ENCODE measurements at regions of chr1 and their contacts with region 1.

Region 1: DNA sequence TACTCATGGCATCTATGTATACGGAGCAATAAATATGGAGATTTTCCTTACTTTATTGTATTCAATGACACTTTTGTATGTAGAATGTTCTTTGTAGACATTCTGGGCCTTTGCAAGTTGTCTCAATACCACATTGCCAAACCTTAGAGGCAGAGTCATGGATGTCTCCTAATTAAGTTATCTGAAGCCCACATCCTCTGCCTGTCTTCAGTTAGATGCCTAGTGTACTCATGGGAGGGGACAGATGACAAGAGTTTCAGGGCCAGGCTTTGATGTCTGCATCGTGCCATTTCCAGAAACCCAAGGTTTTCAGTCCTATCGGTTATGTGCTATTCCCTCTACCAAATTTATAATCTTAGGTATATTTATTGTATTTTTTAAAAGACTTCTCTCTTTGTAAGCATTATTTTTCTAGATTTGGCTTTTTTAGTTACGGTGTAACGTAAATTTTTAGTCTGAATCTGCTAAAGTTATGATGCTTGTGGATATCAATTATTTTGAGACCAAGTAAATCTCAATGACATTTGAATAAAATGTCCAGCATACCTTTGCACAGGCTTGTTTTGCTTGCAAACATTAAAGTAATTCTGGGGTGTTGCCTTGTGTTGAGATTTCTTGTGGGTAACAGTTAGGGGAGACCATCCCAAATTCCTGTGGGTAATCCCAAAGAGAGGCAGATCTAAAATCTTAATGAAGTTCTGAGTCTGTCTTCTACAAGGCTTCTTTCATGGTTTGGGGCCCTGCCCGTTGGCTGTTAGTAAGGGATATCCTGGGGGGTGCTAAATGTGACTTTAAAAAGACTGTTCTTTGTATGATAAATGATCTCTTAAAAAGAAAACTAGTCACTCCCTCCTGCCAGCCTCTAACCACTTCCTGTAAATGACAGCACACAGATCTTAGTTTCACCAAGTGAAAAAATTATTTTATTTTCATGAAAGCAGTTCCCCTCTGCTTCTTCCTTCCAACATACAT is 8.0 kb upstream of the MACF1 start:
- DNase-seq: peak; percentile 45
- H3K4me3 Mint-ChIP-seq: peak overlapping the region; percentile 70
- H3K27ac Mint-ChIP-seq: peak overlapping the region; percentile 95
- H3K4me1 Mint-ChIP-seq: peaks cover 71% of the 10 kb centered on the region
- H3K27me3 Mint-ChIP-seq: no peaks in the 10 kb centered on the region

Region 2: GRCh38 chr1:37474046-37474759 is 1722.3 kb before region 1 on chr1 and contains the start of gene ZC3H12A:
- intact Hi-C with region 1: loop called (anchors 10 kb)
- DNase-seq: peak; percentile 86
- H3K4me3 Mint-ChIP-seq: peak within 1 kb of the TSS; percentile 96
- H3K27ac Mint-ChIP-seq: peak within 1 kb of the TSS; percentile 95
- H3K4me1 Mint-ChIP-seq: peaks cover 40% of the 10 kb centered on the region
- H3K27me3 Mint-ChIP-seq: no peaks in the 10 kb centered on the region
- total RNA-seq, gene ZC3H12A: 23.6 and 25.3 TPM in 2 replicates

Region 3: DNA sequence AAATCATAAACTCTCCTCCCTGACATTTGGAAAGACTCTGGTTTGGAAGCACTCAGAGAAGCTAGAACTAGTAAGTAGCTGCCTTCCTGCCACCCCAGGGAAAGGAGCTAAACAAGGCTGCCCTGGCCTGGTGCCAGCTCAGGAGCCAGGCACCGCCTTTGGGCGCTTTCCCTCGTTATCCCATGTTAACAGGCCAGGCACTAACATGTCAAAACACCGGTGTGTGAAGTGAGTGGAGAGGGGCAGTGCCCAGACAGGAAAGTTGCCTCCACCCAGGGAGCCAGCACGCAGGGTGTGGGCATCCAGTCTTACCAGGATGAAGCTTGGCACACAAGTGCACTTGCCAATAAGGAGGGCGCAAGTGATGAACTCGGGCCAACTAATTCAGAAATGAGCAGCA is 683.7 kb before region 1 on chr1:
- intact Hi-C with region 1: no loop called
- DNase-seq: no peak
- H3K4me3 Mint-ChIP-seq: no peak overlapping the region
- H3K27ac Mint-ChIP-seq: no peak overlapping the region
- H3K4me1 Mint-ChIP-seq: peaks cover 3% of the 10 kb centered on the region
- H3K27me3 Mint-ChIP-seq: peaks cover 31% of the 10 kb centered on the region

Region 4: GRCh38 chr1:39098546-39099250 is 97.8 kb before region 1 on chr1:
- intact Hi-C with region 1: loop called (anchors 1 kb)
- DNase-seq: peak; percentile 59
- H3K4me3 Mint-ChIP-seq: no peak overlapping the region
- H3K27ac Mint-ChIP-seq: no peak overlapping the region
- H3K4me1 Mint-ChIP-seq: peaks cover 19% of the 10 kb centered on the region
- H3K27me3 Mint-ChIP-seq: peaks cover 2% of the 10 kb centered on the region

Region 5: DNA sequence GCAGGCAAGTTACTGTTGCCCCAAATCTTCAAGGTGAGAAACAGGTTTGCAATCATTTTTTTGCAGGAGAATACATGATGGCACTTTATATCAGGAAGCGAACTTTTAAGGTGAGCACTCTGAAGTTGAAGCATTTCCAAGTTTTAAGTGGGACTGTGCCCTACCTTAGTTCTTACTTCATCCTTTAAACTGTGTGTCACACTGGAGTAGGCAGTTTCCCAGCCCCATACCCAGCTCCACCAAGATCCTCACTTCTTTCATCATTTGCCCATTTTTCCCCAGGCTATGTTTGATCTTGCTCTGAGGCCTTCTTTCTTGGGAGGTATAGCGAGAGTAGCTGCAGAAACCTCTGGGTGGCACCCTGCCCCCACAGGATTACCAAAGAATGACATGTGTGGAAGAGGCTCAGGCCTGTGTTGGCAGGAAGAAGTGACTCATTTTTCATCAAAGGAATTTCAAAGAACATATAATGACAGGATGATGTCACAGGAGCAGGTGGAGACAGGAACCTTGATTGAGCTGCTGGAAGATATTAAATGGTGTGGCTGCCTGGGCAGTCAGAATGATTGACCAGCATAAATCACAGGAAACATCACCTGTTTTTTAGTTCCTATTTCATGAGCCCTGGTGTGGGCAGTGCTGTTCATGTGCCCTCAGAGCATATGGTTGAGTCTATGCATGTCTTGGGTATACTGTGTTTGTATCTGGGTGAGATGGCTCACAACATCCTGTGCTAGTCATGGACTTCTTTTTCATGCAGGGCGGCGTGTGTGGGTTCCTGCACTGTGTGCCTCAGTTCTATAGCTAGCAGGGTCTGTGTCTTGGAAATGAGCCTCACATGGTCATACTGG is 12.8 kb before region 1 on chr1:
- intact Hi-C with region 1: loop called (anchors 1 kb)
- DNase-seq: peak; percentile 75
- H3K4me3 Mint-ChIP-seq: peak overlapping the region; percentile 5
- H3K27ac Mint-ChIP-seq: peak overlapping the region; percentile 86
- H3K4me1 Mint-ChIP-seq: peaks cover 43% of the 10 kb centered on the region
- H3K27me3 Mint-ChIP-seq: no peaks in the 10 kb centered on the region

Region 6: GRCh38 chr1:39258146-39258924 is 61.8 kb after region 1 on chr1:
- intact Hi-C with region 1: loop called (anchors 1 kb)
- DNase-seq: peak; percentile 37
- H3K4me3 Mint-ChIP-seq: no peak overlapping the region
- H3K27ac Mint-ChIP-seq: peak overlapping the region; percentile 46
- H3K4me1 Mint-ChIP-seq: peaks cover 32% of the 10 kb centered on the region
- H3K27me3 Mint-ChIP-seq: no peaks in the 10 kb centered on the region

Measured in activated T-helper 2 cell treated with anti-CD3 and anti-CD28 coated beads, Interferon-gamma antibody, Interleukin-2, Interleukin-4, amounts not matched to agents 10 μg/mL and 5 μg/mL and 100 μg/mL, durations not matched to agents 14 hours and 24 hours and 36 hours (primary cell).